Cardiac septum (tissue), 1 donor: ENCODE measurements at regions of chr16 and their contacts with region 1.

Region 1: GRCh38 chr16:20900299-20901067 is at the starts of genes DCUN1D3 and LYRM1:
- DNase-seq: peak; percentile 97
- total RNA-seq, gene DCUN1D3: 10.0 TPM
- total RNA-seq, gene LYRM1: 37.7 TPM

Region 2: DNA sequence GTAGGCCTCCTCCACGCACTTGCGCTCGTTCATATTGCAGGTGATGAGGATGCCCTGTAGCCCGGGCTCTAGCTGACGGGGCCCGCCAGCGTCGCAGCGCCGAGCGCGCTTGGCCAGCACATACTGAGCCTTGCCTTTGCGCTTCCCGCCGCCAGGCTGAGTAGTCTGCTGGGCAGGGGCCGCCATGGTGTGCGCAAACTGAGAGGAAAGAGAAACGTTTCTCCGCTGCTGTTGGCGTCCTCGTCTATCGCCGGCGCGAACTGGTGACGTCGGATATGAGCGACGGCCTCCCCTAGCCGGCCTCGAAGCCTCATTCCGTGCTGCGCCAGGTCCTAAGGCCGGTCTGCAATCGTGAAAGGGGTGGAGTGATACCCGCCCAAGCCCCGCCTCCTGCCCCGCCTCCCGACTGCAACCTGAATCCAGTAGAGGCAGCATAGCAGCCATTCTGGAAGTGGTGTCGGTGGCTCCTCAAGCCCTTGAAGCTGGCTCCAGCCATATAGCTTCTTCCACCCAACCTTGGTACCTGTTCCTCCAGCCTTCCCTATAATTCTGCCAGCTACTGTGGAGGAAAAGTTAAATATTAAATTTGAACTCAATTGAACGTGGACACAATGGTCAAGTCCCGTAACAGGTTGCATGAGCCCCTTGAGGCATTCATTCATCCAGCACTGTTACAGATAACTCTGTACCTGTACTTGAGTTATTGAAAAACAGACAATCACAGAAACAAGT is 158.8 kb before region 1 on chr16 and contains the start of gene THUMPD1:
- intact Hi-C with region 1: loop called (anchors 10 kb)
- DNase-seq: peak; percentile 98
- total RNA-seq, gene THUMPD1: 17.5 TPM

Region 3: GRCh38 chr16:20806168-20807050 is 94.1 kb before region 1 on chr16 and contains the starts of genes ERI2 and REXO5:
- intact Hi-C with region 1: loop called (anchors 10 kb)
- DNase-seq: peak; percentile 95
- total RNA-seq, gene ERI2: 9.8 TPM
- total RNA-seq, gene REXO5: 3.0 TPM

Region 4: DNA sequence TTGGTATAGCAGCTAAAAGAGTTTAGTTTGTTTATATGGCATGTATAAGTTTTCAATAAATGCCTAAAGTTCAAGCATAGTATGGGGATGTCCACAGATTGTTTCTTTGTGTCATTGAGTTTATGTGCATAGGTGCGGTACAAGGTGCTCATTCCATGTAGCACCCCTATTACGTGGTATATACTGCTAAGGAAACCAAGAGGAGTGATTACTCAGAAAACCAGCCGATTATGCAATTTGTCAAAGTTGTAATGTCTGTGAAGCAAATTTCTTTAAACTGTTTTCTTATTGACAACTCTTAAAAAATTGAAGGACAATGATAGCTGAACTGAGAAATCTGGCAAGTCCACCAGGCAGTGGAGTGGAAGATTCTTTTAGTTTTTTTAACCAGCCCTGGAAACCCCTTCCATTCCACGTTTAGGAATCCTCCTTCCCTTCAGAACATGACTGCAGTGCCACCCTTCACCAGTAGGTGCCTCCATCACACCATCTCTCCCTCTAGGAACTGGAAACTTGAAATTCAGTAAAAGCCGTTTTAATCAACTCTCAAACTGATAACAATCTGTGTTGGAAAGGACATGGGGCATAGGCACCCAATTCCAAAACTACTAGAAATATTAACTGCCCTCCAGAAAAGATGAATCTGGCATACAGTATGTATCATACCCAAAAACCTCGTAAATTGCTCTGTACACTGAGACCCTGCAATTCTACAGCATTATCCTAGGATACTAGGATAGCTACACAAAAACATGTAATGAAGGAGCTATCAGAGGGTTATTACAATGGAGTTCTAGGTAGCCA is 50.7 kb before region 1 on chr16:
- intact Hi-C with region 1: loop called (anchors 1 kb)
- DNase-seq: no peak

Region 5: GRCh38 chr16:20866145-20866772 is 34.2 kb before region 1 on chr16:
- intact Hi-C with region 1: loop called (anchors 5 kb)
- DNase-seq: no peak